ENCODE measurements at regions of chr1 and their contacts with region 1.

Region 1: DNA sequence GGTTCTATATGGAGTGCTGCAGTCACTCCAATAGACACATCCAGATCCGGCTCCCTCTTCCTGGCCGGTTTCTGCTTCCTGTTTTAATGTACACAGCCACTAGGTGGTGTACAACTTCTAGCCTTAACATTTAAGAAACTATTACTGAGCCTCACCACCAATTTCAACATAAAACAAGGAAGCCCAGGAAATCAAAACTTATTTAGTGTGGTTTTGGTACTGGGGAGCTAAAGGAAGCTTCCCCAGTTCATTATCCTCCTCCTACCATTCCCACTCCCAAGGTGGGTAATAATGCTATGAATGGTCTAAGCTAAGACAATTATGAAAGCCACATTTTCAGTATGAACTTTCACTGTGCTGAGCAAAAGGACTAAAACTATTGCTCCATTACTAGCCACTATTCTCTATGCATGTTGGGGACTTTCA is 25.5 kb upstream of the MTMR11 start:
- DNase-seq: peak in 3 of 5 donors; percentile 23 to 62 (median 42)
- H3K4me3 ChIP-seq: no peak overlapping the region
- H3K27ac ChIP-seq: peak overlapping the region in 1 of 2 donors; percentile 42
- H3K4me1 ChIP-seq: peaks cover 7% of the 10 kb centered on the region
- H3K27me3 ChIP-seq: no peaks in the 10 kb centered on the region
- CTCF ChIP-seq: peak; percentile 34 to 76 (median 73)
- EP300 ChIP-seq: no peak
- POLR2A ChIP-seq: no peak

Region 2: DNA sequence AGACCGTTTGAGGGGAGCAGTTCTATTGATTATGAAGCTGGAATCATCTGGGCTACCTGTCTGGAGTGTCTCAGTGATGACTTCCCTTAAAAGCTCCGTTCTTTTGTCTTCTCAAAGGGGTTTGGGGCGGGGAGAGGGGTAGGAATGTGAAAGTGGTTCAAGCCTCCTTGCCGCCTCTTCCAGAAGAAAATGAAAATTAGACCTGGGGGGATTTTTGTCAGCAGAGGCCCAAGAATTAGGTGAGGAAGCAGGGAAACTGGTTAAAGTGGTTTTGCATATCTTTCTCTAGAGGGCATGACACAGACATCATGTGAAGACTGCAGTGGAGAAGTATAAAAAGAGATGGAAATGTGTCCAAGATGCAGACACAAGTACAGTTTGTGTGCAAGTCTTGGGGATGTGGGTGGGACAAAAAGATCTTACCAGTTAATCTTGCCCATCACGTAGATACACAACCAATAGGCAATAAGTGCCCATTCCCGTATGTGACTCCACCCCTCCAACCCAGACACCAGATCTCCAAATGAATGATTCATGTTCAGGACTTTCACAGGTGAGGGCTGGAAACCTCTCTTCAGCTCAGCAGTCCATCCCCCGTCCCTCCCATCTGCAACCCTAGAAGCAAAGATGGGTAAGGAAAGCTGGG is 25.0 kb before region 1 on chr1:
- intact Hi-C with region 1: loop called in 1 of 4 experiments (anchors 1 kb)
- DNase-seq: no peak
- H3K4me3 ChIP-seq: peak overlapping the region; percentile 54
- H3K27ac ChIP-seq: peak overlapping the region; percentile 53 to 77
- H3K4me1 ChIP-seq: peaks cover 16% of the 10 kb centered on the region
- H3K27me3 ChIP-seq: no peaks in the 10 kb centered on the region
- CTCF ChIP-seq: no peak
- EP300 ChIP-seq: no peak
- POLR2A ChIP-seq: no peak

Region 3: GRCh38 chr1:150010393-150011115 is 48.4 kb after region 1 on chr1 and contains the start of gene OTUD7B:
- intact Hi-C with region 1: loop called in 1 of 4 experiments (anchors 10 kb)
- DNase-seq: peak; percentile 86 to 94 (median 90)
- H3K4me3 ChIP-seq: peak within 1 kb of the TSS; percentile 64
- H3K27ac ChIP-seq: peak within 1 kb of the TSS; percentile 80 to 93
- H3K4me1 ChIP-seq: peaks cover 9% of the 10 kb centered on the region
- H3K27me3 ChIP-seq: no peaks in the 10 kb centered on the region
- CTCF ChIP-seq: peak in 1 of 3 donors; percentile 23
- EP300 ChIP-seq: no peak
- POLR2A ChIP-seq: peak; percentile 78
- total RNA-seq, gene OTUD7B: 16.5 to 40.1 (median 34.1) TPM

Region 4: DNA sequence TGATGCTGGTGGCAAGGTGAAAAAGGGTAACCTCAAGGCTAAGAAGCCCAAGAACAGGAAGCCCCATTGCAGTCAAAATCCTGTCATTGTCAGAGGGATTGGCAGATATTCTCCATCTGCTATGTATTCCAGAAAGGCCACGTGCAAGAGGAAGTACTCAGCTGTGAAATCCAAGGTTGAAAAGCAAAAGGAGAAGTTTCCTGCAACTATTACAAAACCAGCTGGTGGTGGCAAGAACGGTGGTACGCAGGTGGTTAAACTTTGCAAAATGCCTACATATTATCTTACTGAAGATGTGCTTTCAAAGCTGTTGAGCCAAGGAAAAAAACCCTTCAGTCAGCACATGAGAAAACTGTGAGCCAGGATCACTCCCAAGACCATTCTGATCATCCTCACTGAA is 91.8 kb after region 1 on chr1:
- intact Hi-C with region 1: loop called (anchors 2 to 5 kb)
- DNase-seq: no peak
- H3K4me3 ChIP-seq: no peak overlapping the region
- H3K27ac ChIP-seq: no peak overlapping the region
- H3K4me1 ChIP-seq: no peaks in the 10 kb centered on the region
- H3K27me3 ChIP-seq: no peaks in the 10 kb centered on the region
- CTCF ChIP-seq: no peak
- EP300 ChIP-seq: no peak
- POLR2A ChIP-seq: no peak

Region 5: GRCh38 chr1:150067184-150068036 is 105.3 kb after region 1 on chr1 and contains the start of gene VPS45:
- intact Hi-C with region 1: loop called in 1 of 4 experiments (anchors 5 kb)
- DNase-seq: peak; percentile 87 to 91 (median 88)
- H3K4me3 ChIP-seq: peak within 1 kb of the TSS; percentile 64
- H3K27ac ChIP-seq: peak within 1 kb of the TSS; percentile 89 to 97
- H3K4me1 ChIP-seq: peaks cover 3% of the 10 kb centered on the region
- H3K27me3 ChIP-seq: no peaks in the 10 kb centered on the region
- CTCF ChIP-seq: peak; percentile 30 to 58 (median 30)
- EP300 ChIP-seq: peak; percentile 47
- POLR2A ChIP-seq: peak; percentile 20
- total RNA-seq, gene VPS45: 19.1 to 39.1 (median 32.7) TPM

Region 6: DNA sequence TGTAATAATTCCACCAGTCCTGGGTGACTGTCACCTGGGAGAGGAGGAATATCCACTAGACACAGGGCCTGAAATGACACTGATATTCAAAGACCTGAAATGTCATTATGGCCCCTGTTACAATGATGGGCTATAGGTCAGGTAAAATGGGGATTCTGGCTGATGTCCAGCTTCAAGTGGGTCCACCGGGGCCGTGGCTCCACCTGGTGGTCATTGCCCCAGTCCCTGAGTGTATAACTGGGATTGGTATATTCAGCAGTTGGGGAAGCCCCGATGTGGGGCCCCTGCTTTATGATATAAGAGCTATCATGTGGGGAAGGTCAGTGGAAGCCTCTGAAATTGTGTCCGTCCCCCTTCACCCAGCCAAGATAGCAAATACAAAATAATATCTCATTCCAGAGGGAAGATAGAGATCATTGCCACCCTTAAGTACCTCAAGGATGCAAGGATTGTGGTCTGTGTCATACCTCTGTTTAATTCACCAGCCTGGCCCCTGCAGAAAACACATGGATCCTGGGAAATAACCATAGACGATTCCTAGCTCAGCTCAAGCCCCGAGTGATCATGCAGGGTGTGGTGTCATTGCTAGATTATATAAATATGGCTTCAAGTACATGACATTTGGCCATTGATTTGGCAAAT is 206.9 kb after region 1 on chr1:
- intact Hi-C with region 1: loop called in 3 of 4 experiments (anchors 5 kb)
- DNase-seq: peak; percentile 63 to 84 (median 81)
- H3K4me3 ChIP-seq: no peak overlapping the region
- H3K27ac ChIP-seq: no peak overlapping the region
- H3K4me1 ChIP-seq: peaks cover 2% of the 10 kb centered on the region
- H3K27me3 ChIP-seq: no peaks in the 10 kb centered on the region
- CTCF ChIP-seq: peak; percentile 57 to 93 (median 88)
- EP300 ChIP-seq: no peak
- POLR2A ChIP-seq: no peak

Measured in ovary (tissue), 10 donors.